Aorta (tissue), 5 donors: ENCODE measurements at regions of chr1 and their contacts with region 1.

Region 1: DNA sequence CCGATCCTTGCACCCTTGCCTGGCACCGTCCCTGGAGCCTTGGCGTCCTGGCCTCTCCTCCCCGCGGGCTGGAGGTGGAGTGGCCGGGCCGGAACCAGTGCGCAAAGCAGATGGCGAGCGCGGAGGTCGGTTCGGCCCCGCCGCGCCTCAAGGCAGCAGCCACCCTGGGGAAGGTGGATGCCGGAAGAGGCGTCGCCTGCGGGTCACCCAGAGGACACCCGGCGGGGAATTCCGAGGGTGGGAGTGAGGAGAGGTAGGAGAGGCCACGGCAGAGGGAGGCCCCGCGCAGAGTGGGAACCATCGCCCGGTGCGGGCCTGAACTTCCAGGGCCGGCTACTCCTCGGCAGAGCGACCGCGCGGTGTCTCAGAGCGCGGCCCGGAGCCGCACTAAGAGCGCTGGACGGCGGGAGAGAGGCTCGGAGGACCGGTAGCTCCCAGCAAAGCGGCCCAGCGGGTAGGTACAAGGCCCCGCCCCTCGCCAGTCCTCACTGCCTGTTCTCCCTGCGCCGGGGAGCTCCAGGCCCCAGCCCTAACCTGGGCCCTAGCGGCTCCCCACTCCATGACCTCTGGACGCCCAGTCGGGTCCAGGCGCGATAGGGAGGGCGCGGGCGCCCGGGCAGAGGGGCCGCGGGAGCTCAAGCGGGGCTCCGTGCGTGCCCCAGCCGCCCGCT is at the start of gene RNF207:
- DNase-seq: peak; percentile 82 to 86
- ATAC-seq: peak; percentile 74
- H3K4me3 ChIP-seq: peak within 1 kb of the TSS; percentile 23 to 45
- H3K27ac ChIP-seq: no peak within 1 kb of the TSS
- H3K4me1 ChIP-seq: no peaks in the 10 kb centered on the region
- H3K27me3 ChIP-seq: no peaks in the 10 kb centered on the region
- total RNA-seq, gene RNF207: 13.2 to 31.4 TPM

Region 2: GRCh38 chr1:6235296-6235677 is 29.3 kb after region 1 on chr1:
- intact Hi-C with region 1: loop called in 1 of 2 experiments (anchors 2 kb)
- DNase-seq: no peak
- ATAC-seq: no peak
- H3K4me3 ChIP-seq: peak overlapping the region; percentile 91 to 98
- H3K27ac ChIP-seq: no peak overlapping the region
- H3K4me1 ChIP-seq: no peaks in the 10 kb centered on the region
- H3K27me3 ChIP-seq: no peaks in the 10 kb centered on the region

Region 3: DNA sequence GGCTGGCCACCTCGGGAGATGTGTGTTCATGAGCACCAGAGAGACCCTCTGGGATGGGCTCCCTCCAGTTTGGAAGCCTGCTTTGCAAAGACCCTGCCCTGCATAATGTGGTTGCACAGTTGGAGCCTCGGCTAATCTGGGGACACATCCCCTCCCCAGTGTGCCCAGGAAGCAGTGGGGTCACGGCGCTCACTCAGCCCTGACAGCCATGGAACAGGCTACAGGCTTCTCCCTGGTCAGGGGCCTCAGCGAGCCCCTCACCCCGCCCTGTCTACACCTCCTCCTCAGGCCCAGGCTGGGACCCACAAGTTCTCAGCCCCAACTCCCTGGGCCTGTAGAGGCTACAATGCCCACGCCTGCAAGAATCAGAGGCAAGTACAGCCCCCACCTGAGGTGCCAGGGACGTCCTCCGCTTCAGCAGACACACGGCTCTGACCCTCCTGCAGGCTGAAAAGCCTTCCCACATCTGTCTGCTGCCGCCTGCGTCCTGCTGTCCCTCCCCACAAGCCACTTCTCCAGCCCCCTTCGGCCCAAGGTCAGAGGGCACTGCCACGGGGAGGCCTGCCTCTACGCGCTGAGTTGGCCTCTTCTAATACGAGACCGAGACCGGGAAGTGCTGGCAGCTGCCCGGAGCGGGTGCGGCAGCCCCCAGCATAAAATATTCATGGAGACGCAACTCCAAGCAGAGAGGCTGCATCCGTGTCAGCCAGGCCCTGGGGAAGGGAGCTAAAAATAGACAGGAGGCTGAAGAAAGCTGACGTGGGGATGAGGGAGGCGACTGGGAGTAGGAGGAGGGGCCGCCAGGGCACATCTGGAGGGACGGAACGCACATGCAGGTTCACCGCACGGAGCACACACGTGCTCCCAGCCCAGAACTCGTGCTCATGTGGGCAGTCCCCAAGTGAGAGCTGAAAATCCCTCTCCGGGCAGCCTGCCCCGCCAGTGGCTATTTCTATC is 70.1 kb after region 1 on chr1:
- intact Hi-C with region 1: no loop called
- DNase-seq: peak in 1 of 2 donors; percentile 74
- ATAC-seq: peak; percentile 40
- H3K4me3 ChIP-seq: no peak overlapping the region
- H3K27ac ChIP-seq: no peak overlapping the region
- H3K4me1 ChIP-seq: no peaks in the 10 kb centered on the region
- H3K27me3 ChIP-seq: no peaks in the 10 kb centered on the region

Region 4: GRCh38 chr1:6317098-6317760 is 111.2 kb after region 1 on chr1:
- intact Hi-C with region 1: no loop called
- DNase-seq: no peak
- ATAC-seq: no peak
- H3K4me3 ChIP-seq: no peak overlapping the region
- H3K27ac ChIP-seq: no peak overlapping the region
- H3K4me1 ChIP-seq: no peaks in the 10 kb centered on the region
- H3K27me3 ChIP-seq: no peaks in the 10 kb centered on the region